ENCODE measurements at regions of chr18 and their contacts with region 1.

Region 1: GRCh38 chr18:907115-907884 is 2.6 kb downstream of the ADCYAP1 start:
- DNase-seq: no peak
- ATAC-seq: no peak
- H3K4me3 ChIP-seq: no peak overlapping the region
- H3K27ac ChIP-seq: no peak overlapping the region
- H3K4me1 ChIP-seq: no peaks in the 10 kb centered on the region
- H3K27me3 ChIP-seq: peaks cover 2 to 9% of the 10 kb centered on the region in 2 experiments; a peak in 3 of 4 replicates
- CTCF ChIP-seq: no peak
- EP300 ChIP-seq: no peak
- POLR2A ChIP-seq: no peak
- RAD21 ChIP-seq: no peak

Region 2: GRCh38 chr18:857986-858385 is 49.3 kb before region 1 on chr18:
- CTCF ChIA-PET with region 1: no interaction called
- POLR2A ChIA-PET with region 1: no interaction called
- RAD21 ChIA-PET with region 1: no interaction called
- SMC1A ChIA-PET with region 1: no interaction called
- in situ Hi-C with region 1: loop called (anchors 5 kb)
- intact Hi-C with region 1: no loop called
- DNase-seq: no peak
- ATAC-seq: no peak
- H3K4me3 ChIP-seq: no peak overlapping the region
- H3K27ac ChIP-seq: no peak overlapping the region
- H3K4me1 ChIP-seq: no peaks in the 10 kb centered on the region
- H3K27me3 ChIP-seq: no peaks in the 10 kb centered on the region
- CTCF ChIP-seq: no peak
- EP300 ChIP-seq: no peak
- POLR2A ChIP-seq: no peak
- RAD21 ChIP-seq: no peak

Region 3: DNA sequence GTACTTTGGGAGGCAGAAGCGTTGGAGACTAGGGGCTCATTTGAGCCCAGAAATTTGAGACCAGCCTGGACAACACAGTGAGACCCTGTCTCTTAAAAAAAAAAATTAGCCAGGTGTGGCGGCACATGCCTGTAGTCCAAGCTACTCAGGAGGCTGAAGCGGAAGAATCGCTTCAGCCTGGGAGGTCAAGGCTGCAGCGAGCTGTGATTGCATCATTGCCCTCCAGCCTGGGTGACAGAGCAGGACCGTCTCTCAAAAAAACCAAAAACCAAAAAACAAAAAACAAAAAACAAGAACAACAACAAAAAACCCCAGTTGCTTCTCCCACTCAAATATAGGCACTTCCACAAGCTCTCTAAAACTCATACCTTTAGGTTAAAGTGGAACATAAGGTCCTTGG is 30.1 kb before region 1 on chr18:
- CTCF ChIA-PET with region 1: no interaction called
- POLR2A ChIA-PET with region 1: no interaction called
- RAD21 ChIA-PET with region 1: no interaction called
- SMC1A ChIA-PET with region 1: no interaction called
- in situ Hi-C with region 1: no loop called
- intact Hi-C with region 1: no loop called
- DNase-seq: no peak
- ATAC-seq: no peak
- H3K4me3 ChIP-seq: no peak overlapping the region
- H3K27ac ChIP-seq: no peak overlapping the region
- H3K4me1 ChIP-seq: no peaks in the 10 kb centered on the region
- H3K27me3 ChIP-seq: no peaks in the 10 kb centered on the region; a peak in 1 of 4 replicates
- CTCF ChIP-seq: no peak
- EP300 ChIP-seq: no peak
- POLR2A ChIP-seq: no peak
- RAD21 ChIP-seq: no peak

Region 4: DNA sequence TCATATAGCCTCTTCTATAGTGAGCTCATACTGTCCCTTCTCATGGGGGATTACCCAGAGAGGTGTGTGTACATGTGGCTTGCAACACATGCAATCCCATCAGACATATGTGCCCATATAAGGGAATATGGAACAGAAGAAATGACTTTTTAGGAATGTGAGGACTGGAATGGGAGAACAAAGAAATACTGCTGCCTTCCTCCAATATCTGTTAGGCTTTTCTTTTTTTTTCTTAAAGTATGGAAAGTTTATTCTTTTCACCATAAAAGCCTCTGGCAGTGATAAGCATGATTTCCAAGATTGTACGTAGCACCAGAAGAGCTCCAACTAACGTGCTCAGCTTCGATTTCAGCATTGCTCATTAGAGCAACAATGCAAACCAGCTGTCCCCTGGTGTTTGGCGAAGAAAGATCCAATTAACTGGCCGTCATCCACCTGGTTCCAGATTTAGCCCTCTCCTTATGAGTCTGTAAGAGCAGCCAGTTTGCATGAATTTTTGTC is 110.9 kb after region 1 on chr18:
- CTCF ChIA-PET with region 1: no interaction called
- POLR2A ChIA-PET with region 1: no interaction called
- RAD21 ChIA-PET with region 1: no interaction called
- SMC1A ChIA-PET with region 1: no interaction called
- in situ Hi-C with region 1: no loop called
- intact Hi-C with region 1: no loop called
- DNase-seq: no peak
- ATAC-seq: no peak
- H3K4me3 ChIP-seq: no peak overlapping the region
- H3K27ac ChIP-seq: no peak overlapping the region
- H3K4me1 ChIP-seq: no peaks in the 10 kb centered on the region
- H3K27me3 ChIP-seq: no peaks in the 10 kb centered on the region
- CTCF ChIP-seq: no peak
- EP300 ChIP-seq: no peak
- POLR2A ChIP-seq: no peak
- RAD21 ChIP-seq: no peak